Activated CD4-positive, alpha-beta memory T cell treated with anti-CD3 and anti-CD28 coated beads, Interleukin-2, amount 10 ng/mL, durations not matched to agents 7 days and 5 days (primary cell): ENCODE measurements at regions of chr20 and their contacts with region 1.

Region 1: GRCh38 chr20:59177261-59178250 is 13.9 kb downstream of the ZNF831 start:
- DNase-seq: peak; percentile 63
- H3K4me3 Mint-ChIP-seq: peak overlapping the region; percentile 44
- H3K27ac Mint-ChIP-seq: peak overlapping the region; percentile 84
- H3K4me1 Mint-ChIP-seq: peaks cover 80% of the 10 kb centered on the region
- H3K27me3 Mint-ChIP-seq: no peaks in the 10 kb centered on the region

Region 2: DNA sequence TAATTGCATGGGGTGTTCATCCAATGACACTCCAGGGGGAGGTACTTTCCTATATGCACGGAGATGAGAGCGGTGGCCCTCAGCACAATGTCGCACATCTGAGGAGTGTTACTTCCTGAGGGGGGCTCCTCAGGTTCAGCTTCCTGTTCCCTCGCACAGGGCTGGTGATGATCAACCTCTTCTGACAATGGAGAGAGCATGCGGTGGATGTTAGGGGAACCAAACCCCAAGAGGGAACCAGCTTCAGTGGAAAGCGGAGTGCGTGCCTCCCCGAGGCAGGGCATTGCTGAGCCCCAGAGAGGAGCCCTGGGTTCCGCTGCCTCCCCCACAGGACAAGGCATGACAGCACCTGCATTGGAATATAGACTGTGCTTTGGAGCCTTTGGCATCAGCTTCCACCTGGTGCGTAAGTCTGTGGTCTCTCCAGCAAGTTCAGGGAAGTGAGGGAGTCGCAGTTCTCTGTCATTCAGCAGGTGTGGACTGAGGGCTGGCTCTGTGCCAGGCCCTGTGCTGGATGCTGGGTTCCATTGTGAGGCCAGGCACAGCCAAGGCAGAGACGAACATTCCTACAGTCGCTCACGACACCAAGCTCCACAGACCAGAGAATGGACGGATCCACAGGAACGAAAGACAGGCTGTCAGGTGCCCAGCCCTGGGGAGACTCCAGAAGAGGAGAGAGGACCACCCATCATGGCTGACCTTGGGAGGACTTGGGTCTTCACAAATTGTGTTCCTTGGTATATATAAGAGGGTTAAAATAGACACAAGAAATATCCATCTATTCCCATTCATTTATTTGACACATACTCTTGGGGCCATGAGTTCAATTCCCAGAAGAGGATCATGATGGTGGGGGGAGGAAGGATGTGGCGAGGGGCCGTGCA is 17.8 kb before region 1 on chr20:
- CTCF ChIA-PET with region 1: interaction called, 13 read pairs
- POLR2A ChIA-PET with region 1: interaction called, 108 read pairs
- DNase-seq: peak; percentile 70
- H3K4me3 Mint-ChIP-seq: peak overlapping the region; percentile 76
- H3K27ac Mint-ChIP-seq: peak overlapping the region; percentile 99
- H3K4me1 Mint-ChIP-seq: peaks cover 68% of the 10 kb centered on the region
- H3K27me3 Mint-ChIP-seq: peaks cover 1% of the 10 kb centered on the region